ENCODE measurements at regions of chr18 and their contacts with region 1.

Region 1: GRCh38 chr18:12883684-12884405 is at the start of gene PTPN2:
- DNase-seq: peak; percentile 94
- ATAC-seq: peak; percentile 78
- H3K4me3 Mint-ChIP-seq: peak within 1 kb of the TSS; percentile 94
- H3K27ac Mint-ChIP-seq: peak within 1 kb of the TSS; percentile 93
- H3K4me1 Mint-ChIP-seq: peaks cover 72% of the 10 kb centered on the region
- H3K27me3 Mint-ChIP-seq: no peaks in the 10 kb centered on the region
- CTCF ChIP-seq: no peak
- total RNA-seq, gene PTPN2: 66.4 and 76.5 TPM in 2 replicates

Region 2: GRCh38 chr18:11980555-11981382 is 903.1 kb before region 1 on chr18:
- CTCF ChIA-PET with region 1: no interaction called
- POLR2A ChIA-PET with region 1: no interaction called
- intact Hi-C with region 1: loop called (anchors 10 kb)
- DNase-seq: peak; percentile 96
- ATAC-seq: peak; percentile 91
- H3K4me3 Mint-ChIP-seq: peak overlapping the region; percentile 85
- H3K27ac Mint-ChIP-seq: peak overlapping the region; percentile 46
- H3K4me1 Mint-ChIP-seq: peaks cover 18% of the 10 kb centered on the region
- H3K27me3 Mint-ChIP-seq: no peaks in the 10 kb centered on the region
- CTCF ChIP-seq: no peak

Region 3: DNA sequence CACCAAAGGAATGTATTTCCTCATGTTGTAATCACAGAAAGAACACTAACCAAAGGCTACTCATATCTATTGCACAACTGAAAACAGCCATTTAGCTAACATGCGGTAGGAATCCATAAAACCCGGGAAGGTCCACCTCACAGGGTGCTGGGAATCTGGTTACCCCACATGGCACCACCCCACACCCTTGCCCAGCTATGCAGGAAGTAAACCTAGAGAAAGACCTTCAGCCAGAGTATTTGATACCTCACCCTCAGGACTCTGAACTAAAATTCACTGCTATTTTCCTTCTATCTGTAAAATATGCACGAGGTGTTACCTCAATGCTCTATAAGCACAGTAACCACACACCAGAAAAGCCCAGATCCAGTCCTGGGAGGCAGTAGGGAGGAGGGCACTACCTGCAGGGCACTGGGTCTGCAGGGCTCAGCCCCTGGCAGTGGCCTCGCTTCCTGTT is 45.6 kb before region 1 on chr18:
- CTCF ChIA-PET with region 1: no interaction called
- POLR2A ChIA-PET with region 1: interaction called, 45 read pairs
- intact Hi-C with region 1: loop called (anchors 1 kb)
- DNase-seq: no peak
- ATAC-seq: no peak
- H3K4me3 Mint-ChIP-seq: peak overlapping the region; percentile 52
- H3K27ac Mint-ChIP-seq: peak overlapping the region; percentile 84
- H3K4me1 Mint-ChIP-seq: peaks cover 44% of the 10 kb centered on the region
- H3K27me3 Mint-ChIP-seq: no peaks in the 10 kb centered on the region
- CTCF ChIP-seq: no peak

Region 4: DNA sequence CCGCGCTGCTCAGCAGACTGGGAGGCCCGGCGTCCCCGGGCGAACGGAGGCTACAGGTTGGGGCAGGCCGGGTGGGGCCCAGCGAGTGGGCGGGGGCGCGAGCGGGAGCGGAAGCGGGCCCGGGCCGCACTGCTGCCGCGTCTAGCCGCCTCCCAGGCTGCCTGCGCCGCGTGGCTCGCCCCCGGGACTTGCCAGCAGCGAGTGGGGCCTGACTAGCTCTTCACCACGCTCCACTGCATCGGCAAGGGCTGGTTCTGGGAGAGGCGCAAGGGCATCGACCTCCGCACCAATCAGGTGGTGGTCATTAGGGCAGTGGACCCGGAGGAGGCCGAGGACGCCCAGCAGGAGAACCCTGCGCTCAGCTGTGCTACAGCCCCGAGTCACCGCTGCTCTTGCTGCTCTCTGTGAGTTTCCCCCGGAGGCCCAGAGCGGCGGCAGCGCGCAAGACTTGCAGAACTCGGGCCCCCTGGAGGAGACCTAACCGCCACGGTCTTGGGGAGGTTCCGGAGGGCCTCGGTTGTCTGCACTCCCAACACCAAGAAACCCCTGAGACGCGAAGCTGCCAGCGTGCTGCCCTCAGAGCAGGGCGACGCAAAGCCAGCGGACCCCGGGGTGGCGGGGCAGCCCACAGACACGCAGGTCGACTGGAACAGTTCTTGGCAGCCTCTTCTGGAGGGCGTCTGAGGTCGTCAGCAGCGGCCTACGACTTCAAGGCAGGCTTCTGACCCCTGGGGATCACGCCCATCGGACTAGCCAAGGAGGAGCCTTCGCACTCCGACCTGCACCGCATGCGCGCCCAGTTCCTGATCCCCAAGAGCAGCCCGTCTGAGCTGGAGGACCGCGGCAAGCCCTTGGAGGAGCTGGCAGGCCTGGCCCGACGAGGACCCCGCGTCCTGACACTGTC is 27.4 kb after region 1 on chr18:
- CTCF ChIA-PET with region 1: no interaction called
- POLR2A ChIA-PET with region 1: interaction called, 14 read pairs
- intact Hi-C with region 1: loop called (anchors 2 kb)
- DNase-seq: peak; percentile 59
- ATAC-seq: peak; percentile 93
- H3K4me3 Mint-ChIP-seq: peak overlapping the region; percentile 78
- H3K27ac Mint-ChIP-seq: no peak overlapping the region
- H3K4me1 Mint-ChIP-seq: peaks cover 4% of the 10 kb centered on the region
- H3K27me3 Mint-ChIP-seq: peaks cover 5% of the 10 kb centered on the region
- CTCF ChIP-seq: no peak

Region 5: DNA sequence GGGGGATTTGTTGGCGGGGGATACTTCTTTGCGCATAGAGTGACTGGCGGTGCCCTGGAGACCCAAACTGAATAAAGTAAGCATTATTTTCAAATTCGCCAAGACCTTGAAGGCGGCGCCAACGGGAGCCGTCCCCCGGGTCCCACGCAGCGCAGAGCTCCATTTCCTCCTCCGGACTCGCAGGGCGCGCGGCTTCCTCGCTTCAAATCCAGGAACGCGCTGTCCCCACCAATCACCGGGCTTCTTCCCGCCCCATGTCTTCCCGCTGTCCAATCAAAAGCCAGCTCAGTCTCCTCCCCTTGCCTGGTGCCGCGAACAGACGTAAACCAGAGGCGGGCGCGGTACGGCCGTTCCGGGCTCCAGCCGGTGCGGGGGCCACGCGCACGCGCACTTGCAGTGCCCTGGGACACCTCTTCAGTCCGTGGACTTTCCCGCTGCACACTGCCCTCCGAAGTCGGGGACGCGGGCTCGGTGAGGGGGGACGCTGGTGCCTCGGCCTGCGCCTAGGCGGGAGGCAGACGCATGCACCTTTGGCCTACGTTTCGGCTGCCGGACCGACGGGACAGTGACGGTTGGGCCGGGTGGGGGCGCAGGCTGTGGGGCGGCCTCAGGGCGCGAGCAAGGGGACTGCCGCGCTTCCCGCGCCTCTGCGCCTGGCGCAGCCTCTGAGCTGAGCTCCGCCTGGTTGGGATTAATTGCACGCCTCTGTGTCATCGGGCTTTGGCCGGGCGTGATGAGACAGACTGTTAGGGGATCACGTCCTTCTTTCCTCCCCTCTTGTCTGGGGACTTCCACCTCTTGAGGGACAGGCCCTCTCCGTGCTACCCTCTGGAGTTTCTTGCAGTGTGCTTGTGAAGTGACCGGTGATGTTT is 107.4 kb after region 1 on chr18 and contains the start of gene CEP192:
- CTCF ChIA-PET with region 1: no interaction called
- POLR2A ChIA-PET with region 1: interaction called, 23 read pairs
- intact Hi-C with region 1: loop called (anchors 2 kb)
- DNase-seq: peak; percentile 93
- ATAC-seq: peak; percentile 96
- H3K4me3 Mint-ChIP-seq: peak within 1 kb of the TSS; percentile 93
- H3K27ac Mint-ChIP-seq: peak within 1 kb of the TSS; percentile 94
- H3K4me1 Mint-ChIP-seq: peaks cover 32% of the 10 kb centered on the region
- H3K27me3 Mint-ChIP-seq: no peaks in the 10 kb centered on the region
- CTCF ChIP-seq: no peak
- total RNA-seq, gene CEP192: 33.6 and 34.2 TPM in 2 replicates

Region 6: GRCh38 chr18:13198706-13199105 is 314.9 kb after region 1 on chr18:
- CTCF ChIA-PET with region 1: no interaction called
- POLR2A ChIA-PET with region 1: no interaction called
- intact Hi-C with region 1: no loop called
- DNase-seq: no peak
- ATAC-seq: no peak
- H3K4me3 Mint-ChIP-seq: no peak overlapping the region
- H3K27ac Mint-ChIP-seq: no peak overlapping the region
- H3K4me1 Mint-ChIP-seq: no peaks in the 10 kb centered on the region
- H3K27me3 Mint-ChIP-seq: peaks cover 20% of the 10 kb centered on the region
- CTCF ChIP-seq: no peak

Region 7: DNA sequence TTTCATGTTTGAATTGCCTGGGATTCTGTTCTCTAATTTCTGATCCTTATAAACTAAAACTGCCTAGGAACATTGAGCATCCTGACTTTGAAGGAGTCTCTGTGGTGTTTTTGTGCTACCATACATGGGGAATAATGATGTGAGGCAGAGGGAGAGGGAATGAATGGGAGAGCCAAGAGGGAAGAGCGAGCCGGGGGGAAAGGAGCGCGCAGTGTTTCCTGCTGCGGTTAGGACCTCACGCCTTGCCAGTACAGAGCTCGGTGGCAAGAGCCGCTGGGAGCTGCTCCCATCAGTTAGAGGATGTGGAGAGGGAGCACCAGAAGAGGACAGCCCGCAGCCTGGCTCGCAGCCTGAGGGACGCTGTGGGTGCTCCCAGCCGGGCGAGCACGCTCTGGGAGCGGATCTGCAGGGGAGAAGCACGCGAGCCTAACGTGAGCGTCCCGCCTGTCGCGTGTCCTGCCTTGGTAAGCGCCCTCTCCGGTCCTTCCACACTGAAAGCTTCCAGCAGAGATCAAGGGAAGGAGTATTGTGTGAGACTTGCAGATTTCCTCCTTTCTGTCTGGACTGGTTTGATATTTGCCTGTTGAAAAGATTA is 727.9 kb after region 1 on chr18:
- CTCF ChIA-PET with region 1: no interaction called
- POLR2A ChIA-PET with region 1: interaction called, 3 read pairs
- intact Hi-C with region 1: loop called (anchors 10 kb)
- DNase-seq: peak; percentile 46
- ATAC-seq: no peak
- H3K4me3 Mint-ChIP-seq: peak overlapping the region; percentile 95
- H3K27ac Mint-ChIP-seq: peak overlapping the region; percentile 99
- H3K4me1 Mint-ChIP-seq: peaks cover 89% of the 10 kb centered on the region
- H3K27me3 Mint-ChIP-seq: no peaks in the 10 kb centered on the region
- CTCF ChIP-seq: no peak